ENCODE measurements at regions of chr19 and their contacts with region 1.

Region 1: GRCh38 chr19:8832132-8833021 is at the starts of genes MBD3L1 and ZNF558:
- DNase-seq: peak; percentile 99 to 100
- H3K4me3 ChIP-seq: peak within 1 kb of the TSS; percentile 89 to 98
- H3K27ac ChIP-seq: peak within 1 kb of the TSS; percentile 88 to 98
- H3K4me1 ChIP-seq: peaks cover 0 to 8% of the 10 kb centered on the region in 2 donors
- H3K27me3 ChIP-seq: no peaks in the 10 kb centered on the region
- CTCF ChIP-seq: peak; percentile 7 to 56 (median 49)
- total RNA-seq, gene MBD3L1: not detected
- total RNA-seq, gene ZNF558: 12.8 TPM

Region 2: DNA sequence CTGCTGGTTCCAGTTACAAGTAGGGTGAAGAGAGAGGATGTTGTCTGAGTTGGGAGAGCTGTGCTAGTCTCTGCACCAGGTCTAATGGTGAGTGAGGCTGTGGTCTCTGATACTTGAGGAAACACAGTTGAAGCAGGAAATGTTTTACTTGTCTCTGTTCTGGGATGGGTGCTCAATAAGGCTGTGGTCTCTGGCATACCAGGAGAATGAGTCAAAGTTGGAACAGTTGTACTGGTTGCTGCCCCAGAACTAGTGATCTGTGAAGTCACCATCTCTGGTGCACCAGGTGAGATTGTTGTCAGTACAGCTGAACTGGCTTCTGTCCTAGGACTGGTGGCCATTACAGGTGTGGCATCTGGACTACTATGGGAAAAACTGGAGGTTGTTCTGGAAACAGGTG is 103.1 kb after region 1 on chr19:
- intact Hi-C with region 1: no loop called
- DNase-seq: peak in 1 of 2 donors; percentile 24
- H3K4me3 ChIP-seq: no peak overlapping the region
- H3K27ac ChIP-seq: no peak overlapping the region
- H3K4me1 ChIP-seq: no peaks in the 10 kb centered on the region
- H3K27me3 ChIP-seq: no peaks in the 10 kb centered on the region
- CTCF ChIP-seq: no peak

Region 3: DNA sequence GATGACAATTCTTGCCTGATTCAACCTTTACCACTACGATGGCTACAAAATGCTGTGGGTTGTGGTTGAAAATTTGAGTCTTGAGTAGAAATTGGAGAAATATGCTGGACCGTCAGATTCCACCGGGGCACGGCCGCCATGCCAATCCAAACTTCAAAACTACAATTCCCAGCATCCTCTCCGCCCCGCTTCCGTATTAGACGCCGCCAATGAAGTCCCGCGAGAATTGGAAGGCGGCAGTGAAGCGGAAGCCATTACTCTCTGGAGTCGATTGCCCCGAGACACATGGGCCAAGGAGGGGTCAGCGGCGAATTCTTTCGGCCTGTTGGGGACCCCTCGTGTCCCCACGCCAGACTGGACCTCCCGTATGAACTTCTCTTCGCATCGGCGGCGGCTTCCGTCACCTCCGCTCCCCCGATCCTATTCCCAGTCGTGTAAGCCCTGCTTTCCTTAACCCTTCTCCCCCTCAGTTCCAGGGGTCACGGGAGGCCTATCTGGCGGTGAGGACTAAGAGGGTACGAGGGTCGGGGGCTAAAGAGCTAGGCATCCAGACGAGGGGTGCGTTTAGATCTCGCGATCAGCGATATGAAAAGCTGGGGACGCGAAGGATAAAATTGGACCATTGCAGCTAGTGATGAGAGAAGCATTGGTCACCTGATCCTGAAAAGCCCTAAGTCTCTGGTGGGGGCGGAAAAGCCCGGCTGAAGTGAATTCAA is 307.9 kb after region 1 on chr19 and contains the start of gene ZNF317:
- intact Hi-C with region 1: loop called (anchors 5 kb)
- DNase-seq: peak; percentile 87 to 98
- H3K4me3 ChIP-seq: peak within 1 kb of the TSS; percentile 70 to 71
- H3K27ac ChIP-seq: peak within 1 kb of the TSS; percentile 77 to 79
- H3K4me1 ChIP-seq: peaks cover 0 to 12% of the 10 kb centered on the region in 2 donors
- H3K27me3 ChIP-seq: no peaks in the 10 kb centered on the region
- CTCF ChIP-seq: no peak
- total RNA-seq, gene ZNF317: 22.0 TPM